Ovary (tissue), 10 donors: ENCODE measurements at regions of chr22 and their contacts with region 1.

Region 1: DNA sequence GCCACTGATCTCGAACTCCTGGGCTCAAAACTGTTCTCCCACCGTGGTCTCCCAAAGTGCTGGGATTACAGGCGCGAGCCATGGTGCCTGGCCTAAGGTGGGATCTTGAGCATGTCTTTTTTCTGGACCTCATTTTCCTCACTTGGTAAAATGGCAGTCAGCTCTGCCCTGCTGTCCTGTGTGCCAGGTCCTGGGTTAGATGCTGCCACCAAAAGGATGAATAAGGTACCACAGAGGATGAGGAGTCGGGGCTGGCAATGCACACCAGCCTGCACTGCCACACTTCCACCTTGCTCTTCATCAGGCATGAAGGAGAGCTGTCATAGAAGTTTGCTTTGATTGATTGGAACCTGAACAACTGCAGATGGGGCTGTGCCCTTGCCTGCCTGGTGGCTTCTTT is 32.3 kb downstream of the ACO2 start:
- DNase-seq: no peak
- H3K4me3 ChIP-seq: no peak overlapping the region
- H3K27ac ChIP-seq: no peak overlapping the region
- H3K4me1 ChIP-seq: peaks cover 2% of the 10 kb centered on the region
- H3K27me3 ChIP-seq: no peaks in the 10 kb centered on the region
- CTCF ChIP-seq: no peak
- EP300 ChIP-seq: no peak
- POLR2A ChIP-seq: no peak

Region 2: DNA sequence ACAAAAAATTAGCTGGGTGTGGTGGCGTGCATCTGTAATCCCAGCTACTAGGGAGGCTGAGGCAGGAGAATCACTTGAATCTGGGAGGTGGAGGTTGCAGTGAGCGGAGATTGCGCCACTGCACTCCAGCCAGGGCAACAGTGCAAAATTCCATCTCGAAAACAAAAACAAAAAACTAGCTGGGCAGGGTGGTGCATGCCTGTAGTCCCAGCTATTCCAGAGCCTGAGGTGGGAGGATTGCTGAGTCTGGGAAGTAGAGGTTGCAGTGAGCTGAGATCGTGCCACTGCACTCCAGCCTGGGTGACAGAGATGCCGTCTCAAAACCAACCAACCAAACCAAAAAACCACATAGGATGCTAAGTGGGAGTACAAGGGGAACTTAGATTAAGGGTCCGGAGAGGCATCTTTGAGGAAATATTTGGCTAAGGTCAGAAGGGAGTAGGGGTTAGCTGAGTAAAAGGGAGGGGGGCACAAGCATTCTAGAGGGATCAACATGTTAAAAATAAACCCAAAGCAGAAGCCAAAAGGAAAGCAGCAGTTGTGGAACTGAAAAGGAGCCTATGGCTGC is 43.0 kb before region 1 on chr22:
- intact Hi-C with region 1: loop called in 1 of 4 experiments (anchors 10 kb)
- DNase-seq: no peak
- H3K4me3 ChIP-seq: no peak overlapping the region
- H3K27ac ChIP-seq: no peak overlapping the region
- H3K4me1 ChIP-seq: no peaks in the 10 kb centered on the region
- H3K27me3 ChIP-seq: no peaks in the 10 kb centered on the region
- CTCF ChIP-seq: no peak
- EP300 ChIP-seq: no peak
- POLR2A ChIP-seq: no peak